Ascending aorta (tissue), 2 donors: ENCODE measurements at regions of chr11 and their contacts with region 1.

Region 1: GRCh38 chr11:123062158-123062891 is 389 bp upstream of the HSPA8 start:
- DNase-seq: peak; percentile 99 to 100
- H3K4me3 ChIP-seq: peak overlapping the region; percentile 83 to 88
- H3K27ac ChIP-seq: peak overlapping the region; percentile 98 to 100
- H3K4me1 ChIP-seq: peaks cover 6 to 41% of the 10 kb centered on the region in 2 donors
- H3K27me3 ChIP-seq: no peaks in the 10 kb centered on the region
- CTCF ChIP-seq: no peak

Region 2: GRCh38 chr11:121292495-121293287 is 1769.6 kb before region 1 on chr11 and contains the start of gene SC5D:
- intact Hi-C with region 1: loop called (anchors 2 kb)
- DNase-seq: peak; percentile 89 to 97
- H3K4me3 ChIP-seq: peak within 1 kb of the TSS; percentile 61 to 90
- H3K27ac ChIP-seq: peak within 1 kb of the TSS; percentile 76 to 91
- H3K4me1 ChIP-seq: peaks cover 0 to 7% of the 10 kb centered on the region in 2 donors
- H3K27me3 ChIP-seq: no peaks in the 10 kb centered on the region
- CTCF ChIP-seq: no peak
- total RNA-seq, gene SC5D: 18.8 TPM

Region 3: GRCh38 chr11:122882857-122883645 is 179.3 kb before region 1 on chr11:
- intact Hi-C with region 1: loop called (anchors 5 kb)
- DNase-seq: peak in 1 of 2 donors; percentile 69
- H3K4me3 ChIP-seq: peak overlapping the region; percentile 73 to 86
- H3K27ac ChIP-seq: peak overlapping the region; percentile 84 to 92
- H3K4me1 ChIP-seq: peaks cover 0 to 4% of the 10 kb centered on the region in 2 donors
- H3K27me3 ChIP-seq: no peaks in the 10 kb centered on the region
- CTCF ChIP-seq: no peak

Region 4: GRCh38 chr11:123083623-123084029 is 21.3 kb after region 1 on chr11:
- intact Hi-C with region 1: no loop called
- DNase-seq: peak; percentile 55 to 93
- H3K4me3 ChIP-seq: no peak overlapping the region
- H3K27ac ChIP-seq: peak overlapping the region in 1 of 2 donors; percentile 48
- H3K4me1 ChIP-seq: peaks cover 0 to 2% of the 10 kb centered on the region in 2 donors
- H3K27me3 ChIP-seq: no peaks in the 10 kb centered on the region
- CTCF ChIP-seq: no peak